Adrenal gland (tissue), 19 donors: ENCODE measurements at regions of chr3 and their contacts with region 1.

Region 1: GRCh38 chr3:15805756-15806266 is 8.0 kb upstream of the ANKRD28 start:
- DNase-seq: no peak
- H3K4me3 ChIP-seq: no peak overlapping the region
- H3K27ac ChIP-seq: peak overlapping the region in 3 of 5 donors; percentile 2 to 31 (median 7)
- H3K4me1 ChIP-seq: peaks cover 0 to 20% of the 10 kb centered on the region in 2 donors
- H3K27me3 ChIP-seq: no peaks in the 10 kb centered on the region
- CTCF ChIP-seq: no peak
- POLR2A ChIP-seq: no peak

Region 2: GRCh38 chr3:15629860-15630597 is 175.8 kb before region 1 on chr3:
- intact Hi-C with region 1: loop called (anchors 5 kb)
- DNase-seq: peak; percentile 74 to 90 (median 80)
- H3K4me3 ChIP-seq: peak overlapping the region in 2 of 4 donors; percentile 4 to 39
- H3K27ac ChIP-seq: peak overlapping the region in 3 of 5 donors; percentile 2 to 66 (median 47)
- H3K4me1 ChIP-seq: peaks cover 20 to 32% of the 10 kb centered on the region in 2 donors
- H3K27me3 ChIP-seq: no peaks in the 10 kb centered on the region
- CTCF ChIP-seq: peak; percentile 51 to 92 (median 82)
- POLR2A ChIP-seq: no peak

Region 3: GRCh38 chr3:15753056-15753710 is 52.6 kb before region 1 on chr3:
- intact Hi-C with region 1: no loop called
- DNase-seq: no peak
- H3K4me3 ChIP-seq: no peak overlapping the region
- H3K27ac ChIP-seq: no peak overlapping the region
- H3K4me1 ChIP-seq: no peaks in the 10 kb centered on the region
- H3K27me3 ChIP-seq: no peaks in the 10 kb centered on the region
- CTCF ChIP-seq: no peak
- POLR2A ChIP-seq: no peak